Spleen (tissue), 13 donors: ENCODE measurements at regions of chr5 and their contacts with region 1.

Region 1: DNA sequence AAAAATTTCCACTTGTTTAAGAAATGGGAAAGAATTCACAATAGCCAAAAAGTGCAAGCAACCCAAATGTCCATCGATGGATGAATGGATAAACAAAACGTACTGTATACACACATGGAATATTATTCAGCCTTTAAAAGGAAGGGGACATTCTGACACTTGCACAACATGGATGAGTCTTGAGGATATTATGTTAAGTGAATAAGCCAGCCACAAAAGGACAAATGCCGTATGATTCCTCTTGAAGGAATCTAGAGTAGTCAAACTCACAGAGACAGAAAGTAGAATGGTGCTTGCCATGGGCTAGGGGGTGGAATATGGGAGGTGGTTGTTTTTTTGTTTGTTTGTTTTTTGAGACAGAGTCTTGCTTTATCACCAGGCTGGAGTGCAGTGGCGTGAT is 3.8 kb upstream of the ATP6V0E1 start:
- DNase-seq: no peak
- H3K4me3 ChIP-seq: no peak overlapping the region
- H3K27ac ChIP-seq: no peak overlapping the region
- H3K4me1 ChIP-seq: peaks cover 0 to 20% (median 9%) of the 10 kb centered on the region in 6 donors
- H3K27me3 ChIP-seq: peaks cover 0 to 2% (median 0%) of the 10 kb centered on the region in 7 donors
- CTCF ChIP-seq: no peak
- POLR2A ChIP-seq: no peak

Region 2: GRCh38 chr5:172714491-172715421 is 265.0 kb before region 1 on chr5:
- intact Hi-C with region 1: no loop called
- DNase-seq: peak; percentile 89
- H3K4me3 ChIP-seq: no peak overlapping the region
- H3K27ac ChIP-seq: peak overlapping the region; percentile 48 to 87 (median 81)
- H3K4me1 ChIP-seq: peaks cover 32 to 53% (median 44%) of the 10 kb centered on the region in 6 donors
- H3K27me3 ChIP-seq: peaks cover 0 to 26% (median 0%) of the 10 kb centered on the region in 7 donors
- CTCF ChIP-seq: peak; percentile 63 to 95 (median 93)
- POLR2A ChIP-seq: no peak

Region 3: GRCh38 chr5:173108914-173109313 is 129.1 kb after region 1 on chr5:
- intact Hi-C with region 1: no loop called
- DNase-seq: no peak
- H3K4me3 ChIP-seq: no peak overlapping the region
- H3K27ac ChIP-seq: no peak overlapping the region
- H3K4me1 ChIP-seq: no peaks in the 10 kb centered on the region
- H3K27me3 ChIP-seq: no peaks in the 10 kb centered on the region
- CTCF ChIP-seq: no peak
- POLR2A ChIP-seq: no peak

Region 4: DNA sequence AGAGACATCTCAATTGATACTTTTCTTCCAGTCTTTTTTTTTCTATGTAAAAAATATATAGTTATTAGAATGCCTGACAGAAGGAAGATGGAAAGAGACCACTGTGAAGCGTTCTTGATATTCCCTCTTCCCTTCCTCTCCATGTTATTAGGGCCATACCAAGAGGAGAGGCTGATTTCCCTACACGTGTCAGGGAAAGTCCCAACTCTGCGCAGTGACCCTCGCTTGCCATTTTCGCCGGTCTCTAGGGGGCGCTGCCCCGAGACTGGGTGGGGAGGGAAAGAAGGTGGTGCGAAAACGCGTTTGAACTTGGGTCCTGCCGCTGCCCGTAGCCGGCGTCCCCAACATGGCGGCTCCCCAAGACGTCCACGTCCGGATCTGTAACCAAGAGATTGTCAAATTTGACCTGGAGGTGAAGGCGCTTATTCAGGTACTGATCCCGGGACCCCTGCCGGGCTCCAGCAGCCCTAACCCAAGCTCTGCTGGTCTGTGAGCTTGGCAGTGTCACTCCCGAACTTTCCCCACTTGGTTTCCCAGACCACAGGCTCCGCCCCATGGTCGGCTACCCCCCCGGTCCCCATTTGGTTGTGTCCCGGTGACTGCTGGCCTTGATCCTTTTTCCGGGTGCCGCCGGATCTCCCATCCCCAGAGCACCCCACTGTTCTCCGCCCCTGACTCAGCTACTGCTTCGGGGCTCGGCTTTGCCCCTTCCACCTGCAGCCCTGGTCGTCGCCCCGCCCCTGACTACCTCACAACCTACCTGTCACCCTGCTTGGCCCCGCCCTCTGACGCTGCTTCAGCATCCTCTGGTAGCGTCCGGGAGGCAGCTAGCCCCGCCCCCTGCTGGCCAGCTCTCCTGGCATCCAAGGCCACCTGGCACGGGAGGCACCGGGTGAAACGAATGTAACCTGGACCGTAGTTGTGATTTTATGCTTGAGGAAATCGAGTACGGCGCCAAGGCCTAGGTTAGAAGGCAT is 164.7 kb after region 1 on chr5 and contains the start of gene BNIP1:
- intact Hi-C with region 1: loop called (anchors 5 kb)
- DNase-seq: peak; percentile 99
- H3K4me3 ChIP-seq: peak within 1 kb of the TSS; percentile 68 to 98 (median 86)
- H3K27ac ChIP-seq: peak within 1 kb of the TSS; percentile 89 to 94 (median 92)
- H3K4me1 ChIP-seq: peaks cover 0 to 25% (median 16%) of the 10 kb centered on the region in 6 donors
- H3K27me3 ChIP-seq: no peaks in the 10 kb centered on the region
- CTCF ChIP-seq: peak; percentile 82 to 96 (median 92)
- POLR2A ChIP-seq: no peak
- total RNA-seq, gene BNIP1: 6.0 to 12.3 (median 9.8) TPM

Region 5: GRCh38 chr5:173412566-173412965 is 432.8 kb after region 1 on chr5:
- intact Hi-C with region 1: no loop called
- DNase-seq: no peak
- H3K4me3 ChIP-seq: no peak overlapping the region
- H3K27ac ChIP-seq: no peak overlapping the region
- H3K4me1 ChIP-seq: no peaks in the 10 kb centered on the region
- H3K27me3 ChIP-seq: peaks cover 0 to 28% (median 0%) of the 10 kb centered on the region in 7 donors
- CTCF ChIP-seq: no peak
- POLR2A ChIP-seq: no peak